SK-N-SH (cell line): ENCODE measurements at regions of chr22 and their contacts with region 1.

Region 1: GRCh38 chr22:26072621-26073020 is 96.6 kb upstream of the SEZ6L start:
- DNase-seq: no peak
- H3K4me3 ChIP-seq: no peak overlapping the region
- H3K27ac ChIP-seq: no peak overlapping the region
- H3K4me1 ChIP-seq: no peaks in the 10 kb centered on the region; a peak in 1 of 4 replicates
- H3K27me3 ChIP-seq: no peaks in the 10 kb centered on the region
- CTCF ChIP-seq: no peak
- EP300 ChIP-seq: no peak
- RAD21 ChIP-seq: no peak

Region 2: DNA sequence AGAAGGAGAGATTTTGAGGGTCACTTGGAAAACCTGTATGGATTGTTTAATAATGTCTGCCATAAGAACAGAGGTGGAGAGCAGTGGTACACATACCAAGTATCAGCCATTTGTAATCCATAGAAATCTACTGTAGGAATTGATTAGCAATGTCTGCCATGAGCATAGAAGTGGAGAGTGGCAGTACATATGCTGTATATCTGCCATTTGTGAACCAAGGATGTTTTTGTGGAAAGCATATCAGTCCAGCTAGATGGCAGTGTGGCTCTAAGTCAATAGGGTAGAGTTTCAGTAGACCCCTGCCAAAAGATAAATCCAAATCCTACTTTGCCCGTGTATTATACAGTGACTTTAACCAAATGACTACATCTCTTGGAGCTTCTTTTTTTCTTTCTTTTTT is 13.7 kb after region 1 on chr22:
- CTCF ChIA-PET with region 1: interaction called, 20 read pairs
- POLR2A ChIA-PET with region 1: no interaction called
- DNase-seq: peak; percentile 36
- H3K4me3 ChIP-seq: no peak overlapping the region
- H3K27ac ChIP-seq: no peak overlapping the region
- H3K4me1 ChIP-seq: no peaks in the 10 kb centered on the region
- H3K27me3 ChIP-seq: no peaks in the 10 kb centered on the region
- CTCF ChIP-seq: no peak
- EP300 ChIP-seq: no peak
- RAD21 ChIP-seq: peak; percentile 77

Region 3: DNA sequence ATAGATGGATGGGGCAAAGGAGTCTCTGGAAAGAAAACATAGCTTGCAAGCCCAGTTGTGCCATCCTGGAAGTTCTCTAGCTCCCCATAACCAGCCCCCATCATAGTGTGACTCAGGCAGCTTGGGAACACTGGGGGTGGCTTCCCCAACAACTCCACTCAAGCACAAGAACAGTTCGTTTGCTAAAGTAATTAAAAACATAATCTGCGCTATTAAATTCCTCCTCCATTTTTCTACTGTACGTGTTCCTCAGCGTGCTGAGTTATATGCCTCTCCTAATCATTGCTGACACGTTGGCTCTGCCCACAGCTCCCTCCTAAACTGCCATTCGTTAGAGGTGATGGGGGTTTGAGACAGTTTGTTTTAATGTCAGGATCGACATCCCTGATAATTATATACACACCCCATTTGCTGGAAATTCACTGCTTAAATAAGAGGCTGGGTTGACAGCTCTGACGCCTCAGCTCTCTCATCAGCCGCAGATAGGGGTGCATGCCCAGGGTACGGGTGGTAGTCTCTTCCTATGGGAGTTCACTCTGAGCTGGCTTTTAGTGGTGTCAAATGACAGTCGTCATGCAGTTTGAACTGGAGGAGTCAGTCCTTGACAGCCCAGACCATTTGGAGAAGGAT is 37.2 kb after region 1 on chr22:
- CTCF ChIA-PET with region 1: no interaction called
- POLR2A ChIA-PET with region 1: no interaction called
- DNase-seq: no peak
- H3K4me3 ChIP-seq: no peak overlapping the region
- H3K27ac ChIP-seq: no peak overlapping the region
- H3K4me1 ChIP-seq: peaks cover 0 to 6% of the 10 kb centered on the region in 2 experiments; a peak in 1 of 4 replicates
- H3K27me3 ChIP-seq: no peaks in the 10 kb centered on the region
- CTCF ChIP-seq: no peak
- EP300 ChIP-seq: no peak
- RAD21 ChIP-seq: no peak

Region 4: GRCh38 chr22:26124991-26125725 is 52.5 kb after region 1 on chr22:
- CTCF ChIA-PET with region 1: no interaction called
- POLR2A ChIA-PET with region 1: no interaction called
- DNase-seq: no peak
- H3K4me3 ChIP-seq: no peak overlapping the region
- H3K27ac ChIP-seq: no peak overlapping the region
- H3K4me1 ChIP-seq: peaks cover 0 to 4% of the 10 kb centered on the region in 2 experiments; a peak in 1 of 4 replicates
- H3K27me3 ChIP-seq: no peaks in the 10 kb centered on the region
- CTCF ChIP-seq: no peak
- EP300 ChIP-seq: no peak
- RAD21 ChIP-seq: no peak